ENCODE measurements at regions of chr15 and their contacts with region 1.

Region 1: GRCh38 chr15:93495799-93496637 is 407.0 kb upstream of the RGMA start:
- DNase-seq: peak; percentile 12
- H3K4me3 ChIP-seq: no peak overlapping the region
- H3K27ac ChIP-seq: no peak overlapping the region
- H3K4me1 ChIP-seq: peaks cover 9% of the 10 kb centered on the region
- H3K27me3 ChIP-seq: no peaks in the 10 kb centered on the region
- CTCF ChIP-seq: no peak

Region 2: GRCh38 chr15:92586383-92586942 is 909.6 kb before region 1 on chr15:
- CTCF ChIA-PET with region 1: no interaction called
- dilution Hi-C with region 1: no loop called
- in situ Hi-C with region 1: no loop called
- intact Hi-C with region 1: no loop called
- DNase-seq: no peak
- H3K4me3 ChIP-seq: no peak overlapping the region
- H3K27ac ChIP-seq: no peak overlapping the region
- H3K4me1 ChIP-seq: no peaks in the 10 kb centered on the region
- H3K27me3 ChIP-seq: peaks cover 2% of the 10 kb centered on the region
- CTCF ChIP-seq: no peak

Region 3: DNA sequence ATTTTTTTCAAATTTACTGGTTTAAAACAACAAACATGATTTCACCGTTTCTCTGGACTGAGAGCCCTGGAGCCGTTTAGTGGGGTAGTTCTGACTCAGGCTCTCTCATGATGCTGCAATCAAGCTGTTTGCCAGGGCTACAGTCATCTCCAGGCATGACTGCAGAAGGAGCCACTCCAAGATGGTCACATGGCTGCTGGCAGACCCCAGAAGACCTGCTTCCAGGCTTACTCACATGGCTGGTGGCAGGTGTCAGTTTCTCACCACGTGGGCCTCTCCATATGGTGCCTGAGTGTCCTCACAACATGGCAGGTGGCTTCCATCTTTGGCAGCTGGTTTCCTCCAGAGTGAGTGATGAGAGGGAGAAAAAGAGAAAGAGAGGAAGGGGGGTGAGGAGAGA is 28.7 kb before region 1 on chr15:
- CTCF ChIA-PET with region 1: no interaction called
- dilution Hi-C with region 1: no loop called
- in situ Hi-C with region 1: no loop called
- intact Hi-C with region 1: loop called (anchors 2 kb)
- DNase-seq: peak; percentile 77
- H3K4me3 ChIP-seq: no peak overlapping the region
- H3K27ac ChIP-seq: no peak overlapping the region
- H3K4me1 ChIP-seq: no peaks in the 10 kb centered on the region
- H3K27me3 ChIP-seq: no peaks in the 10 kb centered on the region
- CTCF ChIP-seq: no peak

Measured in mammary epithelial cell (primary cell).